OCI-LY7 (cell line): ENCODE measurements at regions of chr19 and their contacts with region 1.

Region 1: DNA sequence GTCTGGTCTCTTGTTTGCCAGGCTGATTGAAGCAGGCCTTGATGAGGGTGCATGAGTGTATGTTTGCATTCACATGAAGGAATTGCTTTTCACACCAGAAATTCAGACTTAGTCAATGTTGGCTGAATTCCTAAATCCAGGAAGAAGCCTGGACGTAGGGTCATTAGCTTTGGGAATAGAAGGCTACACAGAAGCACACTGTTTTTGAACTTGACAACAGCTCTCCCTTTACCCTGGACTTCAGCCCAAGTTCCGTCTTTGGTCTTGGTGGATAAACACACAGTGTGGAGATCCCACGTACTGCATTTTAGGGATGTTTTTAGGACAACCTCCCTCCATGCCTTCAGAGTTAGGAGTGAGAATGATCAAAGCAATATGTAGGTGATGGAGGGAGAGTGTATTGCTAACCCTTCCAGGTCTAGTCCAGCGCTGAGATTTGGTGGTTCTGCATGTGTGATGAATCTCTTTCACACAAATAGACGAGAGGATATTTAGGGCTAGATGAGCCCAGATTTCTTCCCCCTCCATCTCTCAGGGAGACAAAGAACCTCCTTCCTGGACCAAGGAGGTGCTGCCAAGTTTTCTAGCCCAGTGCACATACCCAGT is 22.8 kb downstream of the TM6SF2 start:
- DNase-seq: no peak
- H3K4me3 ChIP-seq: no peak overlapping the region
- H3K27ac ChIP-seq: no peak overlapping the region
- H3K4me1 ChIP-seq: no peaks in the 10 kb centered on the region
- CTCF ChIP-seq: no peak

Region 2: DNA sequence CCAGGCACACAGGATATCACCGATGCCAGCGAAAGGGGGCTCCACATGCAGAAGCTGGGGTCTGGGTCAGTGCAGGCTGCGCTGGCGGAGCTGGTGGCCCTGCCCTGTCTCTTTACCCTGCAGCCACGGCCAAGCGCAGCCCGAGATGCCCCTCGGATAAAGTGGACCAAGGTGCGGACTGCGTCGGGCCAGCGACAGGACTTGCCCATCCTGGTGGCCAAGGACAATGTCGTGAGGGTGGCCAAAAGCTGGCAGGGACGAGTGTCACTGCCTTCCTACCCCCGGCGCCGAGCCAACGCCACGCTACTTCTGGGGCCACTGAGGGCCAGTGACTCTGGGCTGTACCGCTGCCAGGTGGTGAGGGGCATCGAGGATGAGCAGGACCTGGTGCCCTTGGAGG is 31.4 kb before region 1 on chr19:
- CTCF ChIA-PET with region 1: no interaction called
- POLR2A ChIA-PET with region 1: interaction called, 4 read pairs
- intact Hi-C with region 1: loop called (anchors 1 kb)
- DNase-seq: no peak
- H3K4me3 ChIP-seq: no peak overlapping the region
- H3K27ac ChIP-seq: no peak overlapping the region
- H3K4me1 ChIP-seq: no peaks in the 10 kb centered on the region
- CTCF ChIP-seq: no peak